Naive thymus-derived CD4-positive, alpha-beta T cell (primary cell): ENCODE measurements at regions of chr9 and their contacts with region 1.

Region 1: DNA sequence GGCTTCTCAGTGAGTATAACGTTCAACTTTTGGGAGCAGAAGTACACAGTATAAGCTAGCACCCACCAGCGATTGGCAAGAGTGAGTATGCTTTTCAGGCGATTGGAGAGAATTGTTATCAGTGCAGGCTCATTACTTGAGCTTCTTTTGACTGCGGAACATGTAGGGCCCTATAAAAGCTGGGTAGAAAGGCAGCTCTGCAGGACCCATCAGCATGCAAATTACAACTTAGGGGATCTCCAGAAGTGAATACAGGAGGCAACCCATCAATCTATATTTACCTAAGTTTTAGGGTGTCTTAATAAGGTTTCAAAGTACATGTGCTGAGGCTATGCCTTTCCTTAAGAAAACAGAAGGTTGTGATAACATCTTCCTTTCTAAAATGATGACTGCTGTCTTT is 225.0 kb downstream of the MLLT3 start:
- DNase-seq: no peak
- ATAC-seq: no peak
- H3K4me3 ChIP-seq: no peak overlapping the region
- H3K4me3 Mint-ChIP-seq: peak overlapping the region in 4 of 10 donors; percentile 33 to 72 (median 56)
- H3K27ac ChIP-seq: no peak overlapping the region
- H3K27ac Mint-ChIP-seq: peak overlapping the region in 5 of 9 donors; percentile 48 to 92 (median 68)
- H3K4me1 ChIP-seq: peaks cover 0 to 56% of the 10 kb centered on the region in 2 donors
- H3K4me1 Mint-ChIP-seq: peaks cover 41 to 88% (median 77%) of the 10 kb centered on the region in 7 donors
- H3K27me3 ChIP-seq: no peaks in the 10 kb centered on the region
- H3K27me3 Mint-ChIP-seq: no peaks in the 10 kb centered on the region

Region 2: GRCh38 chr9:20271096-20271495 is 126.3 kb before region 1 on chr9:
- CTCF ChIA-PET with region 1: no interaction called
- POLR2A ChIA-PET with region 1: no interaction called
- intact Hi-C with region 1: loop called in 1 of 2 experiments (anchors 5 kb)
- DNase-seq: peak in 5 of 9 donors; percentile 9 to 34 (median 25)
- ATAC-seq: no peak
- H3K4me3 ChIP-seq: no peak overlapping the region
- H3K4me3 Mint-ChIP-seq: no peak overlapping the region
- H3K27ac ChIP-seq: no peak overlapping the region
- H3K27ac Mint-ChIP-seq: peak overlapping the region in 5 of 9 donors; percentile 0 to 42 (median 12)
- H3K4me1 ChIP-seq: no peaks in the 10 kb centered on the region
- H3K4me1 Mint-ChIP-seq: peaks cover 7 to 35% (median 12%) of the 10 kb centered on the region in 7 donors
- H3K27me3 ChIP-seq: no peaks in the 10 kb centered on the region
- H3K27me3 Mint-ChIP-seq: no peaks in the 10 kb centered on the region

Region 3: DNA sequence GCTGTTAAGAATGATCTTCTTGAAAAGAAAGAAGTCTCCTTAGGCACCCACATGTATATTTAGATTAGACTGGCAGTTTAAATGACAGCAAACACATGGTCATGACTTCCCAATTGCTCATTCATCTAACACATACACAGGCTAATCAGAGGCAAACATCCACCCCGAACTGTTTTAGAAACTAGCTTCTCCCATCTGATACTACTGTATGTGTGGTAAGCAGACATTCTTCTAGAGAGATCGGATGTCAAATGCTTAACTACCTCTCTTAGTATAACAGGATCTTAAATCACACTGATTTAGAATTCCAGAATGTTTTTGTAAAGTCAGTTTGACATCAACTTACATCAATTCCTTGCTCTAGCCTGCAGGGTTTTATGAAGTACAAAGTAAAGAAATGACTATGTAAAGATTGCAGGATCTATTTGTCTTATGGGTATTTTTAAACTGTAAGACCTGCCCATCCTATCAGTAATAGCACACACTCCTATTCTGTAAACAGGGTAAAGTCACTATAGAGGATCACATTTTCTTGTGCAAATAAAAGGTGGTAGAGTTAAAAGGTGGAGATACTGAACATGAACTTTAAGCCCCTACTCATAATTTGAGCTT is 14.8 kb before region 1 on chr9:
- CTCF ChIA-PET with region 1: interaction called, 7 read pairs
- POLR2A ChIA-PET with region 1: interaction called, 13 read pairs
- intact Hi-C with region 1: loop called in 1 of 2 experiments (anchors 2 kb)
- DNase-seq: no peak
- ATAC-seq: peak; percentile 34
- H3K4me3 ChIP-seq: no peak overlapping the region
- H3K4me3 Mint-ChIP-seq: peak overlapping the region in 7 of 10 donors; percentile 0 to 59 (median 19)
- H3K27ac ChIP-seq: peak overlapping the region; percentile 10
- H3K27ac Mint-ChIP-seq: peak overlapping the region in 8 of 9 donors; percentile 1 to 84 (median 17)
- H3K4me1 ChIP-seq: peaks cover 3 to 18% of the 10 kb centered on the region in 2 donors
- H3K4me1 Mint-ChIP-seq: peaks cover 27 to 86% (median 69%) of the 10 kb centered on the region in 7 donors
- H3K27me3 ChIP-seq: no peaks in the 10 kb centered on the region
- H3K27me3 Mint-ChIP-seq: no peaks in the 10 kb centered on the region